K562 (cell line): ENCODE measurements at regions of chr6 and their contacts with region 1.

Region 1: DNA sequence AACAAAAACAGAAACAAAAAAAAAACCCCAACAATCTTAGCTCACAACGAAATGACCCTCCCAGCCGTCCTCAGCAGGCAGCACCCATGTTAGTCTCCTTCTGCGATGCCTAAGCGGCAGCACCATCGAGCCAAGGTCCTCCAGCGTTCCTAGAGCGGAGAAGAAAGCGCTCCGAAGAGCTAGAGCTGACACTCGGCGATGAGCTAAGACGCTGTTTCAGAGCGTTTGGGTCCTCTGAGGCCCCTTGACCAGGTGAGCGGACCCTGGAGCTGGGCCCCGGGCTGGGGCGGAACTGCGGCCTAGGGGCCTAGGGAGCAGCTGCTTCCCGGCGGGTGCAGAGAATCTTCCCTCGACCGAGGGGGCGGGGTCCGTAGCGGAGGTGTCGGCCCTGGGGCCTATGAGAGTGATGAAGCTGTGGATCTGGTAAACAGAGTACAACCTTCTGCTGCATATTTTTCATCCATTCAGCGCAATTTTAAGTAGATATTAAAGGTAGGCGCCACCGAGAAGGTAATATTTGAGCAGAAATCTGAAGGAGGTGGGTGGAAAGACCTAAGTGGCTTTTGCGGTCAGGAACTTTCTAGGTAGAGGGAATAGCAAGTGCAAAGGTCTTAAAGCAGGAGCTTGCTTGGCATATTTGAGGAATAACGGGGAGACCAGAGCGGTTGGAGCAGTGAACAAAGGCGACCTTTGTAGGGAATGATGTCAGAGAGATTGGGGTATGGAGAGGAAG is at the start of gene ZSCAN26:
- DNase-seq: peak; percentile 85 to 95 (median 88)
- ATAC-seq: peak; percentile 95
- H3K4me3 ChIP-seq: peak within 1 kb of the TSS; percentile 61
- H3K27ac ChIP-seq: peak within 1 kb of the TSS; percentile 78
- H3K4me1 ChIP-seq: peaks cover 7 to 26% of the 10 kb centered on the region in 2 experiments
- H3K27me3 ChIP-seq: no peaks in the 10 kb centered on the region
- CTCF ChIP-seq: no peak; a peak in 1 of 6 replicates
- EP300 ChIP-seq: no peak
- POLR2A ChIP-seq: peak; percentile 92
- RAD21 ChIP-seq: peak; percentile 7 to 25; a peak in 2 of 4 replicates
- polyA plus RNA-seq, gene ZSCAN26: 7.3 to 12.8 TPM

Region 2: GRCh38 chr6:27994616-27995015 is 272.5 kb before region 1 on chr6:
- CTCF ChIA-PET with region 1: no interaction called
- POLR2A ChIA-PET with region 1: no interaction called
- in situ Hi-C with region 1: no loop called
- intact Hi-C with region 1: no loop called
- DNase-seq: no peak
- ATAC-seq: no peak
- H3K4me3 ChIP-seq: no peak overlapping the region
- H3K27ac ChIP-seq: no peak overlapping the region
- H3K4me1 ChIP-seq: no peaks in the 10 kb centered on the region
- H3K27me3 ChIP-seq: no peaks in the 10 kb centered on the region
- CTCF ChIP-seq: no peak
- EP300 ChIP-seq: no peak
- POLR2A ChIP-seq: no peak
- RAD21 ChIP-seq: no peak

Region 3: DNA sequence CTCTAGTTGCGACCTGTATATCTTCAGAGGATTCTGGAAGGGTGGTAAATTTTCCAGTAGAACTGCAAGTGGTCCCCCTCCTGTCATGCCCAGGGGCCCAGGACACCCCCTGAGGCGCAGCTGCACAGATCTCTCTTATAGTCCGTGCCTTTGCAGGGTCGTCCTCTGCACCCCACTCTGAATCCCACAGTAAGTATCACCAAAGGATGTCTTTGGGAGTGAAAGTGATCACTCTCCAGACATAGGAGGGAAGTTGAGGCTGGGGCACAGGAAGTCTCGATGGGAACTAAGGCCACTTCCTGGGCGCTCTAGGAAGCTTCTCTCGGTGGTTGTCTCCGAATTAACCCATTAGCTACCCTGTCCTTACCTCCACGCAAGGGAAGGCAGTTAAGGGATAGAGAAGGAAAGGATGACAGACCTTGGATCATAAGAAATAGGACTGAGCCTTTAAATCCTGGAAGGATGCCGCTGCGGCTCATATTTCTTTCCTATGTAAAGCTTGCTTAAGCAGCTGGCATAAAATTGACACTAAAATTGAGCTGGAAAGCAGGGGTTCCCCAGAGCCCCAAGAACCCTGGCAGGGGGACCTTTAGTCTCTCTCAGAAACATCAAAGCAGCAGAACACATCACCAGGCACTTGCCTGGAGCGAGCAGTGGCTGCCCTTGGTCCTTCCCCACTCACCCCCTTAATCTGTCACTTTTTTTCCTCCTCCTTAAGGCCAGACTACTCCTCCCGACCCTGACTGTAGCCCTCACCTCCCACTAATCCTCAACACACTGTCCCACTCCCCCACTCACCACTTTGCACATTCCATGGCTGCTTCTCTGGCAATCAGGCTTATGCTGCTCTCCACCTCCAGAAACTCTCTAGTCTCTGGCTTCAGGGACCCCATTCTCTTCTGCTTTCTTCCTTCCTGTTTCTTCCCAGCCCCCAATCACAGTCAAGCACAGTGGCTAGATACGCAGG is 14.8 kb before region 1 on chr6 and contains the start of gene ZKSCAN4:
- CTCF ChIA-PET with region 1: no interaction called
- POLR2A ChIA-PET with region 1: interaction called, 73 read pairs
- in situ Hi-C with region 1: no loop called
- intact Hi-C with region 1: no loop called
- DNase-seq: peak; percentile 82 to 96 (median 88)
- ATAC-seq: peak; percentile 94
- H3K4me3 ChIP-seq: peak within 1 kb of the TSS; percentile 73
- H3K27ac ChIP-seq: peak within 1 kb of the TSS; percentile 60
- H3K4me1 ChIP-seq: peaks cover 10 to 24% of the 10 kb centered on the region in 2 experiments
- H3K27me3 ChIP-seq: no peaks in the 10 kb centered on the region
- CTCF ChIP-seq: no peak
- EP300 ChIP-seq: peak; percentile 62
- POLR2A ChIP-seq: peak; percentile 75
- RAD21 ChIP-seq: peak; percentile 35 to 38
- polyA plus RNA-seq, gene ZKSCAN4: 1.2 to 1.6 TPM

Region 4: GRCh38 chr6:28281288-28282064 is 14.3 kb after region 1 on chr6 and contains the start of gene PGBD1:
- CTCF ChIA-PET with region 1: no interaction called
- POLR2A ChIA-PET with region 1: interaction called, 61 read pairs
- in situ Hi-C with region 1: no loop called
- intact Hi-C with region 1: no loop called
- DNase-seq: peak; percentile 76 to 92 (median 86)
- ATAC-seq: peak; percentile 97
- H3K4me3 ChIP-seq: peak within 1 kb of the TSS; percentile 73
- H3K27ac ChIP-seq: peak within 1 kb of the TSS; percentile 48
- H3K4me1 ChIP-seq: peaks cover 4 to 7% of the 10 kb centered on the region in 2 experiments; a peak in 2 of 5 replicates
- H3K27me3 ChIP-seq: no peaks in the 10 kb centered on the region
- CTCF ChIP-seq: no peak; a peak in 1 of 6 replicates
- EP300 ChIP-seq: no peak
- POLR2A ChIP-seq: peak; percentile 82
- RAD21 ChIP-seq: peak; percentile 28 to 35
- polyA plus RNA-seq, gene PGBD1: 3.3 to 3.5 TPM

Region 5: DNA sequence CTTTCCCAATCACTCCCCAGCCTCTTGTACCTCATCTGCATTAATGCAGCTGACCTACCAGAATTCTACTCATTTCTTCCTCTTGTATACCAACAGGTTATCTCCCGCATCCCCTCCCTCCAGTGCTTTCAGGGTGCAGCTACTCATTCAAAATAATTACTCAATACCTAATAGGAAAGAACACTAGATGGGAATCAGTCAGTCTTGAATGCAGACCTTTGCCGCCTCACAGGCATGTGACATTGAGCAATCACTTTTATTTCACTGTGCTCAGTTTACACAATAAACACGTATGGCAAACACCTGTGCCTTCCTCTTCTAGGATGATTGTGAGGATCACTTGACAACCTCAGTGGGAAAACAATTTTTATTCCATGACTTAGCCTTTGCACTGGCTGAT is 55.5 kb after region 1 on chr6:
- CTCF ChIA-PET with region 1: no interaction called
- POLR2A ChIA-PET with region 1: no interaction called
- in situ Hi-C with region 1: no loop called
- intact Hi-C with region 1: no loop called
- DNase-seq: no peak
- ATAC-seq: no peak
- H3K4me3 ChIP-seq: no peak overlapping the region
- H3K27ac ChIP-seq: no peak overlapping the region
- H3K4me1 ChIP-seq: no peaks in the 10 kb centered on the region
- H3K27me3 ChIP-seq: no peaks in the 10 kb centered on the region
- CTCF ChIP-seq: no peak
- EP300 ChIP-seq: no peak
- POLR2A ChIP-seq: no peak
- RAD21 ChIP-seq: no peak

Region 6: GRCh38 chr6:28349892-28350737 is 83.0 kb after region 1 on chr6 and contains the start of gene ZKSCAN3:
- CTCF ChIA-PET with region 1: no interaction called
- POLR2A ChIA-PET with region 1: interaction called, 5 read pairs
- in situ Hi-C with region 1: no loop called
- intact Hi-C with region 1: loop called (anchors 5 kb)
- DNase-seq: peak; percentile 87 to 98 (median 90)
- ATAC-seq: peak; percentile 93
- H3K4me3 ChIP-seq: peak within 1 kb of the TSS; percentile 68
- H3K27ac ChIP-seq: peak within 1 kb of the TSS; percentile 86
- H3K4me1 ChIP-seq: peaks cover 24 to 48% of the 10 kb centered on the region in 2 experiments
- H3K27me3 ChIP-seq: no peaks in the 10 kb centered on the region; a peak in 1 of 5 replicates
- CTCF ChIP-seq: no peak; a peak in 1 of 6 replicates
- EP300 ChIP-seq: peak; percentile 64
- POLR2A ChIP-seq: peak; percentile 96
- RAD21 ChIP-seq: peak; percentile 4 to 48; a peak in 3 of 4 replicates
- polyA plus RNA-seq, gene ZKSCAN3: 3.0 to 4.3 TPM